Right ventricle myocardium inferior (tissue), 1 donor: ENCODE measurements at regions of chr17 and their contacts with region 1.

Region 1: GRCh38 chr17:75632863-75633485 is at the start of gene SMIM5:
- DNase-seq: peak; percentile 93
- ATAC-seq: peak; percentile 78
- total RNA-seq, gene SMIM5: 11.4 TPM

Region 2: DNA sequence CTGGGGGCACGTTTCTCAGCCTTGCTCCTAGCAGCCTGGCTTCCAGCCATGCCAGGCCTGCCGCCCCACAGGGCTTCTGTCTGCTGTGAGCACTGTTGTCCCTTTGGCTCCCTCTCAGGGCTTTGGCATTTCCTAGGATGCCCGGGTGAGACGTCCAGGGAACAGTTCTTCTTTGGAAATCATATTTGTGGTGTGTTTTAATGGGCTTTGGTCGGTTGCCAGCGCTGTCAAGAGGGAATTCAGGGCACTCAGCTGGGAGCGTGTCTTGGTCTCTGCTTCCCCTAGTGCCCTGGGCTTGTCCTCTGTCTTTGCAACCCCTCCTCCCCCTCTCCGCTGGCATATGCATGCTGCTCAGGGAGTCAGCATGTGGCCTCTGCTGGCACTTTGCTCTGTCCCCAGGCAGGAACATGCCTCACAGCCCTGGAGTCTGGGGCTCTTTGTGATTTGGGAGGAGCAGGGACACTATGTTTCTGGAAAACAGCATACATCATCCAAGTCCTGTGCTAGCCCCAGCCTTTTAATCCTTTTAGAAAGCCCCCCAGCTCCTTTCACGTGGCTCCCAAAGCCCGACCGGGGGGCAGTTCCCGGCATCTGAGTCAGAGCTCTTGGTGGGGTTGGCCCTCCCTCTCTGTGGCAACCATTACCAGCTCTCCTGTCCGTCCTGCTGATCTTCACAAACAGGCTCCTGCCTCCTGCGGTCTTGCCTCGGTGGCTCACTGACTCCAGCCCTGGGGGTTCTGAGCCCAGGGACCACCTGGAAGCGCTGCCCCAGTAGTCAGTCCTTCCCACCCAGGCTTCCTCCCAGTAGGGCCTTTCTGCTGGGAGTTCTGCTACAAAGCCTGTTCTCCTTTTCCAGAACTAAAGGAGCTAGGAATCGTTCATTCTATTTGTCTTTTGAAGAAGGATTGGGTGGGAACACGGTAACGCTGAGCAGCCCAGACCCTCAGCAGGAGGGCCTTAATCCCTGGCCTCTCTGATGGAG is 60.8 kb after region 1 on chr17:
- intact Hi-C with region 1: loop called (anchors 2 kb)
- DNase-seq: peak; percentile 82
- ATAC-seq: peak; percentile 82

Region 3: DNA sequence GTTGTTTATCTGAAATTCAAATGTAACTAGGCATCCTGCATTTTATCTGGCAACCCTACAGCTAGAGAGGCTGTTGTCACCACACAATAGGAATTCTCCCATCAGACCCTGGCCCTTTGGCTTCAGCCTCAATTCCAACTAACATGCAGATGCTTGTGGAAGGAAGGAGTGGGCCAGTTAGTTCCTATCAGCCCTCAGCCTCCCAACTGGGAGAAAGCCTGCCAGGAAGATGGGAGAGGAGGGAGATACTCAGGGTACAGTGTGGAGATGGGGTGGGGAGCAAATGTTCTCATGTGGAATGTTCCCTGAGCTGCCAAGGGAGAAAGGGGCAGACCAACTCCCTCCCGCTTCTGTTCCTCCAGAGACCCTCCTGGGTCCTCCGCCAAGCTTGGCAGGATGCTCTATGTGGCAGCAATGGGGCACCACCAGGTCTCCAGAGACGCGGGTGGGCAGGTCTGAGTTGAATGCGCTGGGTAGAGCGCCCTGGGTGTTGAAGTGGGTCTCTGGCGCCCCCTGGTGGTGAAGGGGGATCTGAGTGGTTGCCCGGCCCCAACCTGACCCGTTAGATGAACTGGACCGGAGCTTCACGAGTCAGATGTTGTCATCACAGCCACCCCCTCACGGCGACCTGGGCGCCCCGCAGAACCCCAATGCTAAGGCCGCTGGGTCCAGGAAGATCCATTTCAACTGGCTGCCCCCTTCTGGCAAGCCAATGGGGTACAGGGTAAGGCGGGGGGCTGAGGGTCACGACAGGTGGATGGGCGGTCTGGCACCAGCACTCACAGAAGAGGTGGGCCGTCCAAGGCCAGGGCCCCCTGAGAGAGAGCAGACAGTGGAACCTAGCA is 116.8 kb after region 1 on chr17:
- intact Hi-C with region 1: loop called (anchors 1 kb)
- DNase-seq: peak; percentile 95
- ATAC-seq: peak; percentile 68